ENCODE measurements at regions of chr14 and their contacts with region 1.

Region 1: GRCh38 chr14:70821584-70822529 is 12.5 kb upstream of the MAP3K9 start:
- DNase-seq: peak; percentile 75
- H3K4me3 Mint-ChIP-seq: peak overlapping the region; percentile 82
- H3K27ac Mint-ChIP-seq: no peak overlapping the region
- H3K4me1 Mint-ChIP-seq: peaks cover 23% of the 10 kb centered on the region
- H3K27me3 Mint-ChIP-seq: peaks cover 66% of the 10 kb centered on the region

Region 2: DNA sequence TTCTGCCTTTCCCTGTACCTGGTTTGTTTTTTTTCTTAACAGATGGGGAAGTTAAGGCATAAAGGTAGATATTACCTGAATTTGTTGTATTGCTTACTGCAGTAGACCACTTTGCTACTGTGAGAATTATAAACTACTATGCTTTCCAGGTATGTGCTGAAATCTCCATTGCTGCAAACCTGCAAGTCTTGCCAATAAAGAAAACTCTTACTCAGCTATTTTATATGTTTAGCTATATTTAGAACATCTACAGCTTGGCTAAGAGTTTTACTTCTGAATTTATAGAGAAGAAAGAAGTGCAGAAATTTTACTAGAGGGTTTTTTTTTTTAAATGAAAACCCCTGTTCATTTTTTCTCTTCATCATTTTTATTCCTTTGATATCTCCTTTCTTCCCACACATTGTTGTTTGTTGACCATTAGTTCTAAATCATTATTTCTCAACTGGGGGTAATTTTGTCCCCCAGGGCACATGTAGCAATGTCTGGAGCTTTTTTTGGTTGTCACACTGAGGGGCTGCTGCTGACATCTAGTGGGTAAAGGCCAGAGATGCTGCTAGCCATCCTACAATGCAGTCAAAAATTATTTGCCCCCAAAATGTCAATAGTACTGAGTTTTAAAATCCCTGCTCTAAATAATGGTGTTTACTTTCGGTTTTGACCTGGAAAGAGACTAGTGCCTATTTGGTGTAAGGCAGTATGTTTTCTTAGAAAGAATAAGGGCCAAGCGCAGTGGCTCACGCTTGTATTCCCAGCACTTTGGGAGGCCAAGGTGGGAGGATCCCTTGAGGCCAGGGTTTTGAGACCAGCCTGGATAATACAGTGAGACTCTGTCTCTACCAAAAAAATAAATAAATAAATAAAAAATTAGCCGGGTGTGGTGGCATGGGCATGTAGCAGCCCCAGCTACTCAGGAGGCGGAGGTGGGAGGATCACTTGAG is 134.0 kb after region 1 on chr14:
- CTCF ChIA-PET with region 1: interaction called, 104 read pairs
- DNase-seq: peak; percentile 65
- H3K4me3 Mint-ChIP-seq: no peak overlapping the region
- H3K27ac Mint-ChIP-seq: no peak overlapping the region
- H3K4me1 Mint-ChIP-seq: peaks cover 25% of the 10 kb centered on the region
- H3K27me3 Mint-ChIP-seq: no peaks in the 10 kb centered on the region

Region 3: GRCh38 chr14:70972107-70972976 is 150.5 kb after region 1 on chr14:
- CTCF ChIA-PET with region 1: interaction called, 44 read pairs
- DNase-seq: peak; percentile 90
- H3K4me3 Mint-ChIP-seq: no peak overlapping the region
- H3K27ac Mint-ChIP-seq: no peak overlapping the region
- H3K4me1 Mint-ChIP-seq: peaks cover 23% of the 10 kb centered on the region
- H3K27me3 Mint-ChIP-seq: no peaks in the 10 kb centered on the region